Right lobe of liver (tissue), 6 donors: ENCODE measurements at regions of chr18 and their contacts with region 1.

Region 1: DNA sequence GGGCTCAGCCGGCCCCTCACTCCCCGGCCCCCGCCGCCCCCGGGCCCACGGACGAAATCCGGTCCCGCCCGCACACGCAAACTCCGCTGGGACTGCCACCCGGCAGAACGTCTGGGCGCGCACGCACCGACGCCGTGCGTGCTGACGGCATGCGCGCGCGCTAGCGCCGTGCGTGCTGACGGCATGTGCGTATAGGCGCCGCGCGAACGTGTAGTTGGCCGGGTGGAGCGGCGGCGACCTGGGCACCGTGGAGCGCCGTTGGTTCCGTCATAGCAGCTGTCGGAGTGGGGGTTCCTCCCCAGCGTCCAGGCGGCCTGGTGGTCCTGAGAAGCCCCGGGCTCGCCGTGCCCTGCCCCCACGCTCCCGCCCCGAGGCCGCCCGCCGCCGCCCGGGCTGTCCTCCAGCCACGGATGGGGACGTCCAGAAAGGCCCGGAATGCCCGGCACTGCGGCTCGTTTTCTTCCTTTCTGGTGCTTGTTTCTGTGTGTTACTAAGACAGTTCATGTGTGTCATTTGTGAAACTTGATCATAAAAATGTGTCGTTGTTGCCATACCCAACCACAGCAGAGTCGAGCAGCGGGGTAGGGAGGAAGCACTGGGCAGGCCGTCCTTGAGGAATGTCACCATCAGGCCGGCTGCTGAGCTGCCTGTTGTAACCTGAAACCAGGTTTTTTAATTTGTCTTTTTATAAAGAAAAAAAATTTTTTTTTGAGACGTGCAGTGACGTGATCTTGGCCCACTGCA is at the start of gene TXNL4A:
- DNase-seq: peak; percentile 88 to 90 (median 89)
- ATAC-seq: peak; percentile 93 to 99 (median 98)
- H3K4me3 ChIP-seq: peak within 1 kb of the TSS; percentile 60 to 99 (median 93)
- H3K27ac ChIP-seq: peak within 1 kb of the TSS; percentile 85 to 97 (median 95)
- H3K4me1 ChIP-seq: peaks cover 0 to 21% (median 7%) of the 10 kb centered on the region in 4 donors
- H3K27me3 ChIP-seq: no peaks in the 10 kb centered on the region
- CTCF ChIP-seq: no peak
- POLR2A ChIP-seq: peak; percentile 87
- total RNA-seq, gene TXNL4A: 18.5 to 53.9 (median 37.8) TPM

Region 2: GRCh38 chr18:79680123-79680879 is 308.3 kb before region 1 on chr18:
- intact Hi-C with region 1: loop called in 1 of 2 experiments (anchors 10 kb)
- DNase-seq: peak in 1 of 3 donors; percentile 42
- ATAC-seq: no peak
- H3K4me3 ChIP-seq: peak overlapping the region; percentile 73 to 98 (median 78)
- H3K27ac ChIP-seq: peak overlapping the region; percentile 97 to 99 (median 98)
- H3K4me1 ChIP-seq: peaks cover 0 to 20% (median 5%) of the 10 kb centered on the region in 4 donors
- H3K27me3 ChIP-seq: no peaks in the 10 kb centered on the region
- CTCF ChIP-seq: no peak
- POLR2A ChIP-seq: no peak

Region 3: DNA sequence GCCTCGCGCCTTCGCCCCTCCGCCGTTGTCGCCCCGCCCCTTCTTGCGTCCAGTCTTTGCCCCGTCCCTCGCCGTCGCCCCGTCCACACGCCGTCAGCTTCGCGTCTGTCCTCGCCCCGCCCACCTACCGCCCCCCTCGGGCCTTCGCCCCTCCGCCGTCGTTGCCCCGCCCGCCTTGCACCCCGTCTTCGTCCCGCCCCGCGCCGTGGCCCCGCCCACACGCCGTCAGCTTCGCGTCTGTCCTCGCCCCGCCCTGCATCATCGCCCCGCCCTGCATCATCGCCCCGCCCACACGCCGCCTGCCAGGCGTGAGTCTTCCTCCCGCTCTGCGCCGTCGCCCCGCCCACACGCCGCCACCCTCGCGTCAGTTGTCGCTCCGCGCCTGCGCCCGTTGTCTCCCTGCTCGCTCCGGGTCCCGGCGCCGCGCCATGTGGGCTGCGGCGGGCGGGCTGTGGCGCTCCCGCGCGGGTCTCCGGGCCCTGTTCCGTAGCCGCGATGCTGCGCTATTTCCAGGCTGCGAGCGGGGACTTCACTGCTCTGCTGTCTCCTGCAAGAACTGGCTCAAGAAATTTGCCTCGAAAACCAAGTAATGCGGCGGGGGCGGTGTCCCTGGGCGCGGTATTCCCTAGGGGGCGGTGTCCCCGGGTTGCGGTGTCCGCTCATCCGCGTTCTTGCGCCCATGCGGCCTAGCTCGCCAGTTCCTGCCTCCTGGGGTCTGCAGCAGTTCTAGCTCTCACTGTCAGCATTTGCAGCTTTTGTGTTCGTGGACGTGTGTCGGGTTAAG is 45.6 kb after region 1 on chr18 and contains the start of gene RBFA:
- intact Hi-C with region 1: loop called in 1 of 2 experiments (anchors 10 kb)
- DNase-seq: peak; percentile 100
- ATAC-seq: peak; percentile 89 to 95 (median 91)
- H3K4me3 ChIP-seq: peak within 1 kb of the TSS; percentile 70 to 77 (median 77)
- H3K27ac ChIP-seq: peak within 1 kb of the TSS; percentile 49 to 78 (median 55)
- H3K4me1 ChIP-seq: peaks cover 0 to 8% (median 3%) of the 10 kb centered on the region in 4 donors
- H3K27me3 ChIP-seq: no peaks in the 10 kb centered on the region
- CTCF ChIP-seq: peak; percentile 51 to 55 (median 53)
- POLR2A ChIP-seq: peak; percentile 73
- total RNA-seq, gene RBFA: 12.3 to 36.6 (median 18.8) TPM

Region 4: DNA sequence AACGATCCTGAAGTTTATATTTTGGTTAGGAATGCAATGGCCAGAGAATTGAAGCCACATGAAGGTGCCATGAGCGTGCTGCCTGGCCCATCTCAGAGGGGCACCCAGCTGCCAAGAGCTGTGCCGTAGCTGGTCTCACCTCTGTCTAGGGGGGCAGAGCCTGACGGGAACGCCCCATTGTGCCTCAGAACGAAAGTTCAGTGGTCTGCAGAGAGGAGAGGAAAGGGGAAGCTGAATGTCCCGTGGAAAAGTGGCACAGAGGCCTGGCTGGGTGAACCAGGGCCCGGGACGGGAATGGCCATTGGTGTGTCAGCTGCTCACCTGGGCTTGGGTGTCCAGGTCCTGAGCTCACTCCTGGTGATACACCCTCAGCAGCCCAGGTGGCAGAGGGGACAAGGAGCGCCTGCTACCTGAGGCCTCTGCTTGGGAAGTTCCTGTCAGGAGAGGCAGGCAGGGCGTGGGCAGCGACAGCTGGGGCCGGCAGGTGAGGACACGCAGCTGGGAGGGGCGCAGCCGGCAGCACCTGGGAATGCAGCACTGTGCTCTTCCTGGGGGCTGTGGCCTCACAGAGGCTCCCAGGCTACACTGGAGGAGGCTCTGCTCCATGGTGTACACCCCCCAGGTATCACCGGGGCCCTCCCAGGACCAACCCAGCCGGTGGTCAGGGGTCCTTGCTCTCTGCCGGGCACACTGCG is 191.4 kb after region 1 on chr18:
- intact Hi-C with region 1: no loop called
- DNase-seq: no peak
- ATAC-seq: no peak
- H3K4me3 ChIP-seq: no peak overlapping the region
- H3K27ac ChIP-seq: no peak overlapping the region
- H3K4me1 ChIP-seq: no peaks in the 10 kb centered on the region
- H3K27me3 ChIP-seq: no peaks in the 10 kb centered on the region
- CTCF ChIP-seq: no peak
- POLR2A ChIP-seq: no peak

Region 5: GRCh38 chr18:80253871-80254492 is 265.4 kb after region 1 on chr18:
- intact Hi-C with region 1: no loop called
- DNase-seq: no peak
- ATAC-seq: peak in 3 of 4 donors; percentile 31 to 72 (median 61)
- H3K4me3 ChIP-seq: no peak overlapping the region
- H3K27ac ChIP-seq: no peak overlapping the region
- H3K4me1 ChIP-seq: no peaks in the 10 kb centered on the region
- H3K27me3 ChIP-seq: no peaks in the 10 kb centered on the region
- CTCF ChIP-seq: no peak
- POLR2A ChIP-seq: no peak